Activated B cell treated with CpG ODN at 0.5 μM for 24 hours (primary cell): ENCODE measurements at regions of chr5 and their contacts with region 1.

Region 1: DNA sequence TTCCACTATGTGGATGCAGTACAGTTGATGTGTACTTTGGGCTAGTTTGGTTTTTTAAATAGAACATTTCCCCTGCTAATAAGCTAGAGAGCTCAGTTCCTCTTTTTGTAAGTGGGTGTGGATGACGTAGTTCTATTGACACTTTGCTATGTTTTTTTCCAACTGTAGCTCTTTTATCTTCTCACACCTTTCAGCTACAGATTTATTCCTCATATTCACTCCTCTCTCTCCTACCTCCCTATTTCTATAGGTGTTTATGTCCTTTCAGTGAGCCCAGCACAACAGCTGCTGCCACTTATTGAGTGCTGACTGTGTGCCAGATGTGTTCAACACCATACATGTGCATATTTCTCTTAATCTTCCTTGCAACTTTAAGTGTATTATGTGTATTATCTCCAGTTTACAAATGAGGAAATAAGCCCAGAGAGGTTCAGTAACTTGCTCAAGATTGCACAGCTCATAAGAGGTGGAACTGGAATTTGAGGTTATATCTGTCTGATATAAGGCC is 215.7 kb downstream of the SEMA6A start:
- DNase-seq: no peak
- ATAC-seq: peak; percentile 87
- H3K4me3 Mint-ChIP-seq: no peak overlapping the region
- H3K27ac Mint-ChIP-seq: peak overlapping the region; percentile 47
- H3K4me1 Mint-ChIP-seq: peaks cover 27% of the 10 kb centered on the region
- H3K27me3 Mint-ChIP-seq: no peaks in the 10 kb centered on the region
- CTCF ChIP-seq: no peak

Region 2: DNA sequence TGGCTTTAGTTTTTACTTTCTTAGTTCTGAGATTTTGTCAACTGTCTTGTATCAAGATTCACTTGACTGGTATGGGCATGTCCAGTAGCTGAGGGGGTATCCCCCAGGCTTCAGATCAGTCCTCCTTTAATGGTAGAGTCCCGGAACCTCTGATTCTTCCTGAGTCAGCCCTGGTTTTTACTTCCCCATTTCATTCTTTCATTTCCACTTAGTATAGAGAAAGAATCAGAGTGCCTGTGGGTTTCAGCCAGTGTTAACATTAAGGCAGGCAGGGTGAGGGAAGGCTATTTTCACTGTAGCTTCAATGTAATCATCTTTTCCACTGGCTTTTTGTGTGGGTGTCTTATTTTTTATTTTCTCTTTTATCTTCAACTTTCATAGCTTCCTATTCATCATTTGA is 282.5 kb before region 1 on chr5:
- CTCF ChIA-PET with region 1: no interaction called
- POLR2A ChIA-PET with region 1: no interaction called
- intact Hi-C with region 1: loop called (anchors 5 kb)
- DNase-seq: no peak
- ATAC-seq: peak; percentile 95
- H3K4me3 Mint-ChIP-seq: peak overlapping the region; percentile 76
- H3K27ac Mint-ChIP-seq: peak overlapping the region; percentile 88
- H3K4me1 Mint-ChIP-seq: peaks cover 29% of the 10 kb centered on the region
- H3K27me3 Mint-ChIP-seq: no peaks in the 10 kb centered on the region
- CTCF ChIP-seq: no peak